ENCODE measurements at regions of chr7 and their contacts with region 1.

Region 1: GRCh38 chr7:140902303-140902953 is 22.3 kb downstream of the BRAF start:
- DNase-seq: no peak
- H3K4me3 Mint-ChIP-seq: peak overlapping the region; percentile 33
- H3K27ac Mint-ChIP-seq: peak overlapping the region; percentile 88
- H3K4me1 Mint-ChIP-seq: peaks cover 66% of the 10 kb centered on the region
- H3K27me3 Mint-ChIP-seq: no peaks in the 10 kb centered on the region

Region 2: GRCh38 chr7:140726281-140726680 is 176.1 kb before region 1 on chr7:
- CTCF ChIA-PET with region 1: no interaction called
- intact Hi-C with region 1: loop called (anchors 1 kb)
- DNase-seq: no peak
- H3K4me3 Mint-ChIP-seq: no peak overlapping the region
- H3K27ac Mint-ChIP-seq: no peak overlapping the region
- H3K4me1 Mint-ChIP-seq: peaks cover 17% of the 10 kb centered on the region
- H3K27me3 Mint-ChIP-seq: no peaks in the 10 kb centered on the region

Region 3: GRCh38 chr7:140810830-140811556 is 91.4 kb before region 1 on chr7:
- CTCF ChIA-PET with region 1: interaction called, 3 read pairs
- intact Hi-C with region 1: loop called (anchors 5 kb)
- DNase-seq: peak; percentile 78
- H3K4me3 Mint-ChIP-seq: no peak overlapping the region
- H3K27ac Mint-ChIP-seq: no peak overlapping the region
- H3K4me1 Mint-ChIP-seq: peaks cover 2% of the 10 kb centered on the region
- H3K27me3 Mint-ChIP-seq: no peaks in the 10 kb centered on the region

Region 4: GRCh38 chr7:140876519-140877248 is 25.7 kb before region 1 on chr7:
- CTCF ChIA-PET with region 1: no interaction called
- intact Hi-C with region 1: loop called (anchors 1 kb)
- DNase-seq: no peak
- H3K4me3 Mint-ChIP-seq: no peak overlapping the region
- H3K27ac Mint-ChIP-seq: no peak overlapping the region
- H3K4me1 Mint-ChIP-seq: peaks cover 56% of the 10 kb centered on the region
- H3K27me3 Mint-ChIP-seq: no peaks in the 10 kb centered on the region

Region 5: DNA sequence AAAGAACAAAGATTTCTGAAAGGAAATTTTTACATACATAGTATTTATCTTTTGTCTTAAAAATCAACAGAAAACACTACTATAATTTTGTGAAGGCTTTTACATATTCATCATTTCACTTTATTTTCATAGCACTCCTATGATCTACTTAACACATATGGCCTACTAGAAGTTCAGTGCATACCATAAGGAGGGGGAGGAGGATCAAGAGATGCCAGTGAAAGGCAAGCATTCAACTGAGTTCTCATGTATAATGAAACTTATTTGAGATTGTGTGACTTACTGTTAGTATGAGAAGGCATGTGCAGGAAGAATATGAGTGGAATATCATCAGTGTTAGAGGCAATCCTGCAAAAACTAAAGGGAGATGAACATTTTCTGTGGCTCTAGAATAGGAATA is 11.7 kb after region 1 on chr7:
- CTCF ChIA-PET with region 1: no interaction called
- intact Hi-C with region 1: loop called (anchors 1 kb)
- DNase-seq: no peak
- H3K4me3 Mint-ChIP-seq: no peak overlapping the region
- H3K27ac Mint-ChIP-seq: no peak overlapping the region
- H3K4me1 Mint-ChIP-seq: peaks cover 57% of the 10 kb centered on the region
- H3K27me3 Mint-ChIP-seq: no peaks in the 10 kb centered on the region